Activated T-helper 2 cell treated with anti-CD3 and anti-CD28 coated beads, Interferon-gamma antibody, Interleukin-2, Interleukin-4, amounts not matched to agents 10 μg/mL and 5 μg/mL and 100 μg/mL, durations not matched to agents 14 hours and 24 hours and 36 hours (primary cell): ENCODE measurements at regions of chr15 and their contacts with region 1.

Region 1: DNA sequence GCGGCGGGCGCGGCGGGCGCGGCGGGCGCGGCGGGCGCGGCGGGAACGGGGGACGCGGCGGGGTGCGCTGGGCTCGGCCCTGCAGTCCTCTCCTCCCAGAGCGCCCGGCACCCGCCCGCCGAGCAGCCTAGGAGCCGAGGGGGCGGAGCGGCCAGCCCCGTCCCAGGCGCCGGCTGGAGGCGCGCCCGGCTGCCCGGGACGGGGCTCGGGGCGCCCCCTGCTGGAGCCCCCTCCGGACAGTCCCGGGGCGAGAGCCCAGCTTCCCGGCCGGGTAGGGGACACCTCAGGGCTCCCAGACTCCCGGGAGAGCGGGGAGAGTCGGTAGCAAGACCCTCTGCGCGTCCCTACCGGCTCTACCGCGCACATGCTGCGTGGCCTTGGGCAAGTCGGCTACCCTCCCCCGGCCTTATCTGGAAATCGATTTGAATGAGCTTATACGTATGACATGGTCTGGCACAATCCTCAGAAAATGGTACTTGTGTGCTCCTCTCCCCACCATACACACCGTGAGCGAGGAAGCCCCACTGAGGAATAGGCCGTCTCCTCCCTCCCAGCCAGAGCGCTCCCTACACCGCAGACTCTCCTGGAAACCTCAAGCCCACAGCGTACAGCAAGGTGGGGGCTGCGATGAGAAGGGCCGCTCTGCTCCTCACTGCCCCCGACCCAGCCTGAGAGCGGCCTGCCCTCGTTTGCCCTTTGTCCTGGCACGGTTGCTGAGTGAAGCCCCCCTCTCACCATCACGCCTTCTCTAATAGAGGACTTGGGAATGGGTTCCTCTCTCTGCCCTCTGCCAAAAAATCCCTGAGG is at the start of gene DAPK2:
- DNase-seq: peak; percentile 58
- H3K4me3 Mint-ChIP-seq: peak within 1 kb of the TSS; percentile 68
- H3K27ac Mint-ChIP-seq: no peak within 1 kb of the TSS
- H3K4me1 Mint-ChIP-seq: peaks cover 13% of the 10 kb centered on the region
- H3K27me3 Mint-ChIP-seq: peaks cover 28% of the 10 kb centered on the region
- total RNA-seq, gene DAPK2: 1.9 and 2.0 TPM in 2 replicates

Region 2: GRCh38 chr15:63752075-63752684 is 294.4 kb before region 1 on chr15:
- intact Hi-C with region 1: loop called (anchors 5 kb)
- DNase-seq: peak; percentile 32
- H3K4me3 Mint-ChIP-seq: no peak overlapping the region
- H3K27ac Mint-ChIP-seq: no peak overlapping the region
- H3K4me1 Mint-ChIP-seq: peaks cover 5% of the 10 kb centered on the region
- H3K27me3 Mint-ChIP-seq: no peaks in the 10 kb centered on the region

Region 3: DNA sequence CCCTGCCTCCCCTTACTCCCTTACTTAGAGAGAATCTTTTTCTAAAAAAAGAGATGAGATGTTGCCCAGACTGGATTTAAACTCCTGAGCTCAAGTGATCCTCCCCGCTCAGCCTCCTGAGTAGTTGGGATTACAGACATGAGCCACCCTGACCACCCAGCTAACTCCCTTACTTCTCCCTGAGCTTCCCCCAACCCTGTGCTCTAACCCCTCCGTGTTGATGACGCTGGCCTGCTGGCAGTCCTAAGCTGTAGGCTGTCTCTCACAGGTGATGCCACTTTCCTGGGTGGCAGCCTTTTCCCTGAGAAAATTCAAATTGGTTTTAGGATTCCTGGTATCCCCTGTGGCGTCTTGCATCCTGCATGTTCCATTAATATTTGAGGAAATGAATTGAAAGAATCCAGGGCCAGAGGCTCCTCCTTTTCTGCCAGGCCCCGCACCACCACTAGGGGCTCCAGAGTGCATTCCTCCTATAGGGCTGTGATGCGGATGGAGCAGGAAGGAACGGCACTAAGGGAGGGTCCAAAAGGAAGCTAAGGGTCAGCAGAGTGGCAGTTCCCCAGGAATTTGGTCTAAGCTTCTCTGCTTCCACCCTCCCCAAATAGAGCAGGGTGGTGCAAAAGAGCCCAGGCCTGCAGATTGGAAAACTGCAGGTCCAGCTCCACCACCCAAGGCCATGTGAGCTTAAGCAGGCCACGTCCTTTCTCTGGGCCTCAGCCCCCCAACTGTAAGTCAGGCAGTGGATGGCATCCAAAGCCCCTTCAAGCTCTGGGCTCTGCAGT is 101.4 kb before region 1 on chr15:
- intact Hi-C with region 1: loop called (anchors 10 kb)
- DNase-seq: peak; percentile 52
- H3K4me3 Mint-ChIP-seq: no peak overlapping the region
- H3K27ac Mint-ChIP-seq: peak overlapping the region; percentile 36
- H3K4me1 Mint-ChIP-seq: peaks cover 13% of the 10 kb centered on the region
- H3K27me3 Mint-ChIP-seq: no peaks in the 10 kb centered on the region

Region 4: GRCh38 chr15:64004582-64004981 is 42.0 kb before region 1 on chr15:
- intact Hi-C with region 1: no loop called
- DNase-seq: no peak
- H3K4me3 Mint-ChIP-seq: no peak overlapping the region
- H3K27ac Mint-ChIP-seq: no peak overlapping the region
- H3K4me1 Mint-ChIP-seq: peaks cover 24% of the 10 kb centered on the region
- H3K27me3 Mint-ChIP-seq: peaks cover 6% of the 10 kb centered on the region